A549 (cell line): ENCODE measurements at regions of chr1 and their contacts with region 1.

Region 1: GRCh38 chr1:23691499-23692307 is at the start of gene RPL11:
- DNase-seq: peak; percentile 83 to 95
- ATAC-seq: peak; percentile 99
- H3K4me3 ChIP-seq: peak within 1 kb of the TSS; percentile 97
- H3K27ac ChIP-seq: peak within 1 kb of the TSS; percentile 83 to 98
- H3K4me1 ChIP-seq: peaks cover 37% of the 10 kb centered on the region
- CTCF ChIP-seq: peak; percentile 38
- EP300 ChIP-seq: no peak
- POLR2A ChIP-seq: peak; percentile 76
- RAD21 ChIP-seq: 0 out of 5 replicates have a peak, but pooled peaks of 1 of the 2 experiments have one; percentile 26
- polyA plus RNA-seq, gene RPL11: 979 and 1,292 TPM in 2 replicates

Region 2: GRCh38 chr1:23673086-23673813 is 18.5 kb before region 1 on chr1:
- CTCF ChIA-PET with region 1: interaction called, 13 read pairs
- POLR2A ChIA-PET with region 1: interaction called, 11 read pairs
- DNase-seq: peak; percentile 67 to 79
- ATAC-seq: peak; percentile 85 to 86
- H3K4me3 ChIP-seq: no peak overlapping the region
- H3K27ac ChIP-seq: no peak overlapping the region
- H3K4me1 ChIP-seq: peaks cover 15% of the 10 kb centered on the region
- CTCF ChIP-seq: no peak
- EP300 ChIP-seq: no peak
- POLR2A ChIP-seq: no peak
- RAD21 ChIP-seq: no peak

Region 3: DNA sequence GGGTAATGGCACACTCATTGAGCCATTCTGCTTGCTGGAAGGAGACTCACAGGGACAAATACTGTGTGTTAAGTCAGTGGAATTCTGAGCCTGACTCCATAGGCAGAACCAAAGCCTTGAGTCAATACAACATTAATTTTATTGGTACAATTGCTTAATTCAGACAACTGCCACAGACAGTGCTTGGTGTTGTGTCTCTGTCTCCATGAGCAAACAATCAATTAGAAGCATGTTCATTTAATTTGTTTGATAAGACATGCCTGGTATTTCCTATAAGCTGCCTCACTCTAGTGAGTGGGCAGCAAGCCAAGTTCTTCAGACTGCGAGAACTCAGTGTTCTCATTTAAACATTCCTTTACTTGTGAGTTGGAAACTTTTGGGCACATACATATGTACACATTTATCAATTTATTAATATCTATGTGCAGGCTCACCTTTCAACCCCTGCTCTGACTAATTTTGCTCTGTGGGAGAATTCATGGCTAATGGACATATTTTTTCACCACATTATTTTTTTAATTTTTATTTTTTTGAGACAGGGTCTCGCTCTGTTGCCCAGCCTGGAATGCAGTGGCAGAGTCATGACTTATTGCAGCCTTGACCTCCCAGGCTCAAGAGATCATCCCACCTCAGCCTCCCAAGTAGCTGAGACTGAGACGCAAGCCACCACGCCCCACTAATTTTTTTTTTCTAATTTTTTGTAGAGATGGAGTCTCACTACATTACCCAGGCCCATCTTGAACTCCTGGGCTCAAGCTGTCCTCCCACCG is 292.9 kb after region 1 on chr1:
- CTCF ChIA-PET with region 1: no interaction called
- POLR2A ChIA-PET with region 1: no interaction called
- DNase-seq: peak in 1 of 2 experiments; percentile 45
- ATAC-seq: no peak
- H3K4me3 ChIP-seq: no peak overlapping the region
- H3K27ac ChIP-seq: peak overlapping the region; percentile 42 to 69; a peak in 4 of 6 replicates
- H3K4me1 ChIP-seq: peaks cover 26% of the 10 kb centered on the region
- CTCF ChIP-seq: no peak
- EP300 ChIP-seq: no peak
- POLR2A ChIP-seq: no peak
- RAD21 ChIP-seq: no peak